ENCODE measurements at regions of chr20 and their contacts with region 1.

Region 1: GRCh38 chr20:44866703-44867335 is 18.7 kb upstream of the YWHAB start:
- DNase-seq: no peak
- H3K4me3 ChIP-seq: no peak overlapping the region
- H3K27ac ChIP-seq: no peak overlapping the region
- H3K4me1 ChIP-seq: no peaks in the 10 kb centered on the region
- CTCF ChIP-seq: no peak

Region 2: GRCh38 chr20:44747166-44748004 is 119.4 kb before region 1 on chr20:
- CTCF ChIA-PET with region 1: interaction called, 3 read pairs
- POLR2A ChIA-PET with region 1: interaction called, 5 read pairs
- intact Hi-C with region 1: loop called (anchors 1 kb)
- DNase-seq: peak; percentile 78
- H3K4me3 ChIP-seq: no peak overlapping the region
- H3K27ac ChIP-seq: no peak overlapping the region
- H3K4me1 ChIP-seq: peaks cover 12% of the 10 kb centered on the region
- CTCF ChIP-seq: peak; percentile 94

Region 3: GRCh38 chr20:44800398-44801046 is 66.3 kb before region 1 on chr20:
- CTCF ChIA-PET with region 1: no interaction called
- POLR2A ChIA-PET with region 1: interaction called, 3 read pairs
- intact Hi-C with region 1: loop called (anchors 1 kb)
- DNase-seq: peak; percentile 8
- H3K4me3 ChIP-seq: no peak overlapping the region
- H3K27ac ChIP-seq: no peak overlapping the region
- H3K4me1 ChIP-seq: no peaks in the 10 kb centered on the region
- CTCF ChIP-seq: peak; percentile 81

Measured in OCI-LY7 (cell line).